HepG2 (cell line): ENCODE measurements at regions of chr2 and their contacts with region 1.

Region 1: GRCh38 chr2:46306330-46306751 is 9.1 kb downstream of the EPAS1 start:
- DNase-seq: peak; percentile 97
- ATAC-seq: peak; percentile 55
- H3K4me3 ChIP-seq: peak overlapping the region; percentile 44 to 54 (median 54); a peak in 4 of 6 replicates
- H3K27ac ChIP-seq: peak overlapping the region; percentile 97
- H3K4me1 ChIP-seq: peaks cover 100% of the 10 kb centered on the region
- H3K27me3 ChIP-seq: no peaks in the 10 kb centered on the region
- CTCF ChIP-seq: no peak
- EP300 ChIP-seq: peak in 1 of 2 experiments; percentile 97; a peak in 2 of 4 replicates
- POLR2A ChIP-seq: peak in 1 of 2 experiments; percentile 52; a peak in 3 of 4 replicates
- RAD21 ChIP-seq: 0 out of 2 replicates have a peak, but pooled peaks have one; percentile 7

Region 2: DNA sequence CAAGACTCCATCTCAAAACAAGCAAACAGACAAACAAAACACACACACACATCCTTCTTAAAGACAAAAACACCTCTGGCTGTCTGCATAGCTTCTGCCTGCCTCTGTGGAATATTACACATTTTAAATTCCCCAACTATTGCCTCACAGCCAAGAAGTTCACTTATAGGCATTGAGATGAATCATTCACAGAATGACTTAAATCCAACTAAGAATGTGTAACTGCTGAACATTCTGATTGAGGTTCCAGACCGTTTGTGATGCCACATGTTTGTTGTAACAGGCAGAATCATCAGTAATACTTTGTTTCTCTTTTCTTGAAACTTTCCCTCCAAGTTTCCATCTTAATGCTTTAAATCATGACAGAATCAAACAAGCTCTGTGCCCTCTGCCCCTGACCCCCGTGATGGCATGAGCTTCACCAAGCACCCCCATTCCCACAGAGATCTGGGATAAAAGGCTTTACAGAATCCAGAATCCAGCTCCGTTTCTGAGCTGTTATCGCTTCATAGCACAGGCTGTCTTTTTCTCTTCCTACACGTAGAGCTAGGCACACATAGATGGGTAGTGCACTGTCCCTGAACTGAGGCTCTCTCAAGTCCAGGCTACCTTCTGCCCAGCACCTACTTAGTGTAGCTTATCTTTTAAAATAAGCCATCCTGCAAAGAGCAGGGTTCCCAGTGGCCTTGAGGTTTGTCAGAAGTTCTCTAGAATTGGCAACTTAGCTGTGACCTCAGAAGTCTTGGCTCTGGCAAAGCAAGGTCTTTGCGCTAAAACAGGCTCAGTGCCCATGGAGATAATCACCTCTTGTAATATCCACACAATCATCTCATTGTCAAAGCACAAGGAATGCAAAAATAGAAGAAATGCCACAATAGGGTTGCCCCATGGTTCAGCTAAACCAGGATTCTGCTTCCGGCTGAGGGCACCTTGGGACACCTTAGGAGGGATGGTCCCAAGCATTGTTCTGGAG is 23.7 kb after region 1 on chr2:
- CTCF ChIA-PET with region 1: no interaction called
- POLR2A ChIA-PET with region 1: interaction called, 16 read pairs
- in situ Hi-C with region 1: no loop called
- intact Hi-C with region 1: loop called (anchors 1 kb)
- DNase-seq: peak; percentile 67
- ATAC-seq: 0 out of 3 replicates have a peak, but pooled peaks have one; percentile 4
- H3K4me3 ChIP-seq: no peak overlapping the region
- H3K27ac ChIP-seq: no peak overlapping the region
- H3K4me1 ChIP-seq: peaks cover 100% of the 10 kb centered on the region
- H3K27me3 ChIP-seq: no peaks in the 10 kb centered on the region
- CTCF ChIP-seq: no peak
- EP300 ChIP-seq: no peak
- POLR2A ChIP-seq: no peak
- RAD21 ChIP-seq: no peak

Region 3: GRCh38 chr2:46335391-46336282 is 29.3 kb after region 1 on chr2:
- CTCF ChIA-PET with region 1: no interaction called
- POLR2A ChIA-PET with region 1: interaction called, 16 read pairs
- in situ Hi-C with region 1: no loop called
- intact Hi-C with region 1: loop called (anchors 1 kb)
- DNase-seq: no peak
- ATAC-seq: peak; percentile 5; the same call in 1 of the 3 replicates
- H3K4me3 ChIP-seq: peak overlapping the region in 1 of 3 experiments; percentile 24; a peak in 1 of 6 replicates
- H3K27ac ChIP-seq: peak overlapping the region; percentile 16
- H3K4me1 ChIP-seq: peaks cover 93% of the 10 kb centered on the region
- H3K27me3 ChIP-seq: no peaks in the 10 kb centered on the region
- CTCF ChIP-seq: no peak
- EP300 ChIP-seq: peak in 1 of 2 experiments; percentile 38; a peak in 1 of 4 replicates
- POLR2A ChIP-seq: no peak
- RAD21 ChIP-seq: no peak